Activated T-helper 1 cell treated with anti-CD3 and anti-CD28 coated beads, Interleukin-12 subunit alpha, Interleukin-12 subunit beta, Interleukin-2, Interleukin-4 antibody, amounts not matched to agents 30 ng/mL and 10 ng/mL and 1 ng/mL, durations not matched to agents 14 hours and 24 hours and 36 hours (primary cell): ENCODE measurements at regions of chr16 and their contacts with region 1.

Region 1: GRCh38 chr16:56950881-56951771 is 10.6 kb upstream of the CETP start:
- DNase-seq: peak; percentile 32
- H3K4me3 Mint-ChIP-seq: no peak overlapping the region
- H3K27ac Mint-ChIP-seq: peak overlapping the region; percentile 65
- H3K4me1 Mint-ChIP-seq: peaks cover 26% of the 10 kb centered on the region
- H3K27me3 Mint-ChIP-seq: no peaks in the 10 kb centered on the region

Region 2: DNA sequence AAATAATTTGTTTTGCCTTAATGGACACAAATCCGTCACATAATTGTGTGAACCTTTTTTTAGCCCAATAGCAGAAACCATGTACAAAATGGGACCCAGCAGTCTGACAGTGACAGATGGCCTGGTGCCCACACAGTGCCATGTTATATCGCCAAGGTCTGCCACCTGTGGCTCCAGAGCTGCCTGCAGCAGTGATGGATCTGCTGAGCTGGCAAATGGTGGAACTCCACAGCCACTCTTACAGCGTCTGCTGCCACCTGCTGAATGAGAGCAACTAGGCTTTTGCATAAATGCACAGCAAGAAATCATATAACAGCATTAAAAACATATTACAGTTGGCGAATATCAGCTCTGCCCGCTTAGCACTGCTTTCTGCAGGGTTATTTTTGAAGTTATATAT is 161.8 kb before region 1 on chr16:
- intact Hi-C with region 1: loop called (anchors 5 kb)
- DNase-seq: peak; percentile 5
- H3K4me3 Mint-ChIP-seq: no peak overlapping the region
- H3K27ac Mint-ChIP-seq: no peak overlapping the region
- H3K4me1 Mint-ChIP-seq: no peaks in the 10 kb centered on the region
- H3K27me3 Mint-ChIP-seq: no peaks in the 10 kb centered on the region

Region 3: GRCh38 chr16:56866943-56867830 is 83.9 kb before region 1 on chr16:
- intact Hi-C with region 1: loop called (anchors 1 kb)
- DNase-seq: peak; percentile 24
- H3K4me3 Mint-ChIP-seq: no peak overlapping the region
- H3K27ac Mint-ChIP-seq: no peak overlapping the region
- H3K4me1 Mint-ChIP-seq: peaks cover 22% of the 10 kb centered on the region
- H3K27me3 Mint-ChIP-seq: no peaks in the 10 kb centered on the region

Region 4: GRCh38 chr16:56898847-56899246 is 52.3 kb before region 1 on chr16:
- intact Hi-C with region 1: loop called (anchors 5 kb)
- DNase-seq: no peak
- H3K4me3 Mint-ChIP-seq: no peak overlapping the region
- H3K27ac Mint-ChIP-seq: no peak overlapping the region
- H3K4me1 Mint-ChIP-seq: peaks cover 15% of the 10 kb centered on the region
- H3K27me3 Mint-ChIP-seq: peaks cover 20% of the 10 kb centered on the region